ENCODE measurements at regions of chr1 and their contacts with region 1.

Region 1: DNA sequence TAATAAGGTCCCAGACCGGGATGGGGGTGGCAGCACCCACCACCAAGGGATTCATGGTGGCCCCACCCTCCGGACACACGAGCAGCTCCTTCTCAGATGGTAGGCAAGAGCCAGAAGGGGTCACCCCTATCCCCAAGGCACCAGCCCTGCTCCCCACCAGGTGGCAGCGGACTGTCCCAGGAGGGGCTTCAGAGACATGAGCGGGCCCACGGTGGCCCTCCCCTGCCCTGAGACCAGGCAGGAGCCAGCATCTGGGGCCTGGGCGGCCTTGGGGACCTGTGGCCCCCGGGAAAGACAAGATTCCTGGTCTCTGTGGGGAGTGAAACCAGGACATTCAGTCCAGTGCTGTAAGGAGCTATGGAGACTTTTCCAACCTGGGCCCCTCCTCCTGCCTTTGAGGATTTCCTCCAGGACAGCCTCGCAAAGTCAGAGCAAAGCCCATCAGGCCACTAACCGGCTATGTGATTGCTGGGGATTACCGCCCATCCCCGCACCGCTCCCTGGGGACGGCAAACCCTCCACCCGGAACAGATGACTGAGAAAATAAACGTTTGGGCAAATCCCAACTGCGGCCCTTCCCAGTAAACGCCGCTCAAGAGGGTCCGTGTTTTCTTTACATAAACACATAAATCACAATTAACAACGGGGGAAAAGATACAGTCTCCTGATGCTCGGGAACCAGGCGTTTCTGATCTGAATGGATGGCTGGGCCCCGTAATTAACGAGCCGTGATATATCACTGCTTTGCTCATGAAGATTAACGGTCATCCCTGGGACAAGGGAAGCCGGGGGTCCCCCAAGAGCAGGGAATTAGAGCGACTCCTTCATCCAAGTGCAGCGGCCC is 50.9 kb upstream of the ARHGEF16 start:
- DNase-seq: no peak

Region 2: DNA sequence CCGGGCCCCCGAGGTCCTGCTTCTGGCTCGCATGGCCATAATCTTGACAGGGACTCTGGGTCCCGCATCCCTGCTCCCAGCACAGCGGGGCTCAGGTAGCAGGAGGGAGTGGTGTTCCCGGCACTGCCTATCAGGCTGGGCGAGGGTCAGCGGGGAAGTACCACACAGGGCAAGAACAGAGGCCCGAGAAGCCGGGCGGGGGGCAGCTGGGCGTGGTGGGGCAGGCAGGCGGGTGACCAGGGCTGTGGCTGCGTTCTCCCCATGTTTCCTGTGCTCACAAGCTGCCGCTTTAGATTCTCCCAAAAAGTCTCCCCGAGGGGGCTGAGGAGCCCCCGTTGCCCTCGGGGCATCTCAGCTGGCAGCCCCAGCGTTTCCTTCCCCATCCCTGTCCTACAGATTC is 1913.7 kb before region 1 on chr1:
- intact Hi-C with region 1: loop called in 1 of 2 experiments (anchors 5 kb)
- DNase-seq: no peak

Region 3: DNA sequence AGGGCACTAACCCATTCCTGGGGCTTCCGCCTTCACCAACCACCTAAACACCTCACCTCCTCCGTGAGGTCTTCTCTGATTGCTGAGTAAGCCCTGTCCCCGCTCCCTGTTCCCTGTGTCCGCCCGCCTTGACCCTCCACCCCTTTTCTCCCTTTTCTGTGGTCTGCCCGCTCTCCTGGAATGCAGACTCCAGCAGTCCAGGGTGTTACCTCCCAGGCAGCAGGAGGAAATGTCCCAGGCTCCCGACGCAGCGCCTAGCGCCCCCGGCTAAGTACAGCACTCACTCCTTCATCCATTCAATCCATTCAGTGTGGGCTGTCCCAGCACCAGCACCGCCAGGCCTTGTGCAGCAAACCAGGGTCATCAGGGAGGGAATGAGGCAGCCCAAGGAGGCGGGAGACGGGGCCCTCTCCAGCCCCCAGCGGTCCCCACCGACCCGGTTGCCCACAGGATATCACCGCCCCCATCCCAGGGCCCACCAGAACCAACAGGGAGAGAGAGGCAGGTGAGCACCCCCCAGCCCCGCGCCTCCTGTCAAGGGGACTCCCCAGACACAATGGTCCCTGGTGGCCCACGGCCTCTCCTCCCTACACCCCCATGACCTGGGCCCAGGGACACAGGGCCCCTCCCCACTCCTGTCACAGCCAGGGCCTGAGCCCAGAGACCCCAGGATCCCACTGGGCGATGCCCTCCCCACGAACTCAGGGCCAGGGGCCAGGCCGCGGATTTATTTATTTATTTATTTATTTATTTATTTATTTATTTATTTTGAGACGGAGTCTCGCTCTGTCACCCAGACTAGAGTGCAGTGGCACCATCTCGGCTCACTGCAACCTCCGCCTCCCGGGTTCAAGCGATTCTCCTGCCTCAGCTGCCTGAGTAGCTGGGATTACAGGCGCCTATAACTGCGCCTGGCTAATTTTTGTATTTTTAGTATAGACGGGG is 837.2 kb before region 1 on chr1:
- intact Hi-C with region 1: no loop called
- DNase-seq: no peak

Region 4: DNA sequence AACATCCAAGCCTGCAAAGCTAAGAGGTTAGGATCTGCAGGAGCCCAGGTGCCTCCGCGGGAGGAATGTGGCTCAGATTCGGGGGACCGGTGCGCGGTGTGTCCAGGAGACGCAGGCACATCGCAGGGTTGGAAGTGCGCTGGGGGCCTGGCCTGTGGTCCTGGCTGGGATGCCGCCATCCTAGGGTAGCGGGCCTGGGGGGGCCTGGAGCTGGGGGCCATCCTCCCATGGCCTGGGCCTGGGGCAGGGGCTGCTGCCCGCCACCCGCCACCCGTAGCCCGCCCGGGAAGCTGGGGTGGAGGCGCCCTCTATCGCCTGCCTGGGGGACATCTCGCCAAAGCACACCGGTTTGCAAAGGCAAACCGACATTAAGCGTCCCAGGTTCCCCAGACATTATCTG is 119.8 kb before region 1 on chr1:
- intact Hi-C with region 1: loop called in 1 of 2 experiments (anchors 10 kb)
- DNase-seq: no peak

Region 5: GRCh38 chr1:3359351-3360104 is 44.1 kb before region 1 on chr1:
- intact Hi-C with region 1: loop called in 1 of 2 experiments (anchors 5 kb)
- DNase-seq: no peak

Measured in posterior vena cava (tissue), 2 donors.